ENCODE measurements at regions of chr21 and their contacts with region 1.

Region 1: GRCh38 chr21:44932408-44933181 is 7.2 kb upstream of the SLX9 start:
- DNase-seq: no peak
- ATAC-seq: peak in 1 of 2 donors; percentile 51
- H3K4me3 ChIP-seq: peak overlapping the region; percentile 31 to 46 (median 40)
- H3K27ac ChIP-seq: no peak overlapping the region
- H3K4me1 ChIP-seq: peaks cover 0 to 19% of the 10 kb centered on the region in 2 donors
- H3K27me3 ChIP-seq: peaks cover 39 to 54% (median 53%) of the 10 kb centered on the region in 3 donors
- CTCF ChIP-seq: peak; percentile 37 to 54 (median 50)
- POLR2A ChIP-seq: no peak

Region 2: GRCh38 chr21:44892536-44893277 is 39.9 kb before region 1 on chr21:
- in situ Hi-C with region 1: no loop called
- intact Hi-C with region 1: loop called (anchors 2 kb)
- DNase-seq: peak in 1 of 2 donors; percentile 48
- ATAC-seq: peak; percentile 52 to 67
- H3K4me3 ChIP-seq: no peak overlapping the region
- H3K27ac ChIP-seq: no peak overlapping the region
- H3K4me1 ChIP-seq: no peaks in the 10 kb centered on the region
- H3K27me3 ChIP-seq: peaks cover 0 to 8% (median 2%) of the 10 kb centered on the region in 3 donors
- CTCF ChIP-seq: peak; percentile 58 to 84 (median 75)
- POLR2A ChIP-seq: no peak

Region 3: GRCh38 chr21:44947111-44947929 is 14.7 kb after region 1 on chr21:
- in situ Hi-C with region 1: no loop called
- intact Hi-C with region 1: no loop called
- DNase-seq: peak; percentile 84 to 93
- ATAC-seq: peak; percentile 64 to 77
- H3K4me3 ChIP-seq: peak overlapping the region in 3 of 4 donors; percentile 31 to 33 (median 31)
- H3K27ac ChIP-seq: peak overlapping the region; percentile 90 to 96 (median 94)
- H3K4me1 ChIP-seq: peaks cover 39 to 48% of the 10 kb centered on the region in 2 donors
- H3K27me3 ChIP-seq: no peaks in the 10 kb centered on the region
- CTCF ChIP-seq: no peak
- POLR2A ChIP-seq: no peak

Region 4: DNA sequence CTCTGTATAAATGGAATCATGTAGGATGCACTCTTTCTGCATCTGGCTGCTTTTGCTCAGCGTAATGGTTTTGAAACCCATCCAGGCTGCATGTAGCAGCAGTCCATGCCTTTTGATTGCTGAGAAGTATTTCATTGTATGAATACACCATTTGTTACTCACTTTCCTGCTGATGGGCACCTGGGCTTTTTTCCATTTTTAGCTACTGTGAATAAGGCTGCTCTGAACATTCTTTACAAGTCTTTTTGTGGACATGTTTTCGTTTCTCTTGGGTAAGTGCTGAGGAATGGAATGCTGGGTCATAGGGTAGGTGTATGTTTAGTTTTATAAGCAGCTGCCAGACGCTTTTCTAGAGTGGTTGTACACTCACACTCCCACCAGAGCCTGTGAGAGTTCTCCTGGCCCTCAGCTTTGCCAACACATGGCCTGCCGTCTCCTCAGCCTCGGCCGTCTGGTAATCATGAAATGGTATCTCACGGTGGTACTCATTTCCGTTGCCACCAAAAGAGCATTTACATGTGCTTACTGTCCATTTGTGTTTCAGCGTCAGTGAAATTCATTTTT is 29.9 kb after region 1 on chr21:
- in situ Hi-C with region 1: no loop called
- intact Hi-C with region 1: no loop called
- DNase-seq: no peak
- ATAC-seq: no peak
- H3K4me3 ChIP-seq: no peak overlapping the region
- H3K27ac ChIP-seq: peak overlapping the region in 1 of 4 donors; percentile 3
- H3K4me1 ChIP-seq: peaks cover 34 to 35% of the 10 kb centered on the region in 2 donors
- H3K27me3 ChIP-seq: no peaks in the 10 kb centered on the region
- CTCF ChIP-seq: no peak
- POLR2A ChIP-seq: no peak

Measured in gastrocnemius medialis (tissue), 4 donors.